ENCODE measurements at regions of chr2 and their contacts with region 1.

Region 1: DNA sequence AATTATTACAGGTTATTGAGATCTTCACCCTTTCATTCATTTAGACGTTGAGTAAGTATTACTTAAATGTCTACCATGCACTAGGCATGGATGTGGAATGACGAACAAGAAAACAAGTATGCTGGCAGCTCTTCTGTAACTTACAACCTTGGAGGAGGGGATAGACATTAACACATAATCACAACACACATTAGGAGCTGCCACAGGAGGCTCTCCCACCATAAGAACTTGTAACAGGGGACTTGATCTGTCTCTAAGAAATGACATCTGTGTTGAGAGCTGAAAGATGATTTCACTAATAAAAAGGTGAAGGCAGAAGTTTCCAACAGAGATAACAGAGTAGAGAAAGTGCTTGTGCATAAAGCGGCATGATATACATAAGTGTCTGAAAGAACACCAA is 384.7 kb upstream of the ZEB2 start:
- DNase-seq: no peak
- ATAC-seq: no peak
- H3K4me3 ChIP-seq: no peak overlapping the region
- H3K27ac ChIP-seq: no peak overlapping the region
- H3K4me1 ChIP-seq: no peaks in the 10 kb centered on the region
- H3K27me3 ChIP-seq: no peaks in the 10 kb centered on the region
- CTCF ChIP-seq: no peak

Region 2: DNA sequence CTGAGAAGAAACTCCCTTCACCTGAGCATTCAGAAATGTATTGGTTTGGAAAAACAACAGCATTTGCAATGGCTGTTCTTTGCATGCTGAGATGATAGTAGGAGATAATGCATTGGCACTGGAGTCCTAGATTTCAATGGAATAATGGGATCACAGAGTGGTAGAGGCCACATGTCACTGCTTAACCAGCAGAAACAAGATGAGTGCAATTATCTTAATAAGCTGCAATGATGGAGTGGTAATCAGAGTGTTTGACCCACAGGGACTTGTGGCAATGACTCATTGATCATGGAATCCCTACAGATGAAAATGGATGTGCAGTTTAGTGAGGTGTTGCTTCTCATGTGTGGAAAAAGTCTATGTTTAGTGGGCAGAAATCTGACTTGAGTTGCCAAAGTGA is 165.9 kb before region 1 on chr2:
- intact Hi-C with region 1: no loop called
- DNase-seq: no peak
- ATAC-seq: no peak
- H3K4me3 ChIP-seq: no peak overlapping the region
- H3K27ac ChIP-seq: no peak overlapping the region
- H3K4me1 ChIP-seq: no peaks in the 10 kb centered on the region
- H3K27me3 ChIP-seq: no peaks in the 10 kb centered on the region
- CTCF ChIP-seq: no peak

Region 3: DNA sequence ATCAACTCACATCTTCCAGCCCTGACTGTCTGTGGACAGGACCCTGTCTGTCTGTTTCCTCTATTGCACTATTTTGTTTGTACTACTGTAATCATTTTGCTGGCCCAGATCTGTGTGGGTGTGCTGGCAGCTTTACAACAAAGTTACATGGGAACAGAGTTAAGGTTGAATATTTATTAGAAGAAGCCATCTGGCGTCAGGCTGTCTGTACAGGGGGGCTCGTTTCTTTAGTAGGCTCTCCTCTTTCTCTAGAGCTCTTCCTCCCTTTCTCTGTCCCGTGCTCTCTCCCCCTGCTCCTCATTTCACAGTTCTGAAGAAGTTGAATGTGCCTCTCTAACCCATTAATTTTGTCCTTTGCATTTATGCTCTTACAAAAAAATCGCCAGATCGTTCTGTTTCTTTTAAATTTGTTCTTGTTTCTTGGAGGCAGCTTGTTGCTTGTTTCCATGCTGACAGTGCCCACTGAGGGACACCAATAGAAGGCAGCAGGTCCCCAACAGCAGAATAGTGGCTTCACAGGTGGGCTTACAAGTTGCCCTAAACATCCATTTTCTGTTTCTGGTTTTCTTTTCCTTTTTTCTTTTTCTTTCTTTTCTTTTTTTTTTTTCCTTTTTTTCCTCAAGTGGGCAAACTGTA is 69.5 kb before region 1 on chr2:
- intact Hi-C with region 1: no loop called
- DNase-seq: peak; percentile 8 to 58
- ATAC-seq: peak in 7 of 8 donors; percentile 67 to 86 (median 79)
- H3K4me3 ChIP-seq: no peak overlapping the region
- H3K27ac ChIP-seq: peak overlapping the region in 8 of 10 donors; percentile 33 to 78 (median 55)
- H3K4me1 ChIP-seq: peaks cover 0 to 29% (median 5%) of the 10 kb centered on the region in 9 donors
- H3K27me3 ChIP-seq: no peaks in the 10 kb centered on the region
- CTCF ChIP-seq: no peak

Region 4: GRCh38 chr2:144975881-144976280 is 71.3 kb after region 1 on chr2:
- intact Hi-C with region 1: loop called in 1 of 10 experiments (anchors 2 kb)
- DNase-seq: no peak
- ATAC-seq: no peak
- H3K4me3 ChIP-seq: no peak overlapping the region
- H3K27ac ChIP-seq: no peak overlapping the region
- H3K4me1 ChIP-seq: no peaks in the 10 kb centered on the region
- H3K27me3 ChIP-seq: no peaks in the 10 kb centered on the region
- CTCF ChIP-seq: no peak

Region 5: GRCh38 chr2:145043399-145043834 is 138.8 kb after region 1 on chr2:
- intact Hi-C with region 1: no loop called
- DNase-seq: no peak
- ATAC-seq: no peak
- H3K4me3 ChIP-seq: no peak overlapping the region
- H3K27ac ChIP-seq: no peak overlapping the region
- H3K4me1 ChIP-seq: peaks cover 0 to 3% (median 0%) of the 10 kb centered on the region in 9 donors
- H3K27me3 ChIP-seq: no peaks in the 10 kb centered on the region
- CTCF ChIP-seq: peak in 1 of 9 donors; percentile 11